ENCODE measurements at regions of chr2 and their contacts with region 1.

Region 1: GRCh38 chr2:64865073-64865830 is 123.9 kb upstream of the SLC1A4 start:
- DNase-seq: peak; percentile 62 to 69
- H3K4me3 ChIP-seq: peak overlapping the region; percentile 42 to 54
- H3K27ac ChIP-seq: peak overlapping the region; percentile 86 to 87
- H3K4me1 ChIP-seq: peaks cover 0 to 5% of the 10 kb centered on the region in 2 donors
- H3K27me3 ChIP-seq: no peaks in the 10 kb centered on the region
- CTCF ChIP-seq: peak; percentile 40 to 95 (median 92)
- POLR2A ChIP-seq: peak in 1 of 2 donors; percentile 17

Region 2: GRCh38 chr2:64595397-64596160 is 269.7 kb before region 1 on chr2:
- intact Hi-C with region 1: loop called (anchors 10 kb)
- DNase-seq: no peak
- H3K4me3 ChIP-seq: no peak overlapping the region
- H3K27ac ChIP-seq: no peak overlapping the region
- H3K4me1 ChIP-seq: no peaks in the 10 kb centered on the region
- H3K27me3 ChIP-seq: no peaks in the 10 kb centered on the region
- CTCF ChIP-seq: peak in 2 of 4 experiments; percentile 9 to 32
- POLR2A ChIP-seq: no peak

Region 3: DNA sequence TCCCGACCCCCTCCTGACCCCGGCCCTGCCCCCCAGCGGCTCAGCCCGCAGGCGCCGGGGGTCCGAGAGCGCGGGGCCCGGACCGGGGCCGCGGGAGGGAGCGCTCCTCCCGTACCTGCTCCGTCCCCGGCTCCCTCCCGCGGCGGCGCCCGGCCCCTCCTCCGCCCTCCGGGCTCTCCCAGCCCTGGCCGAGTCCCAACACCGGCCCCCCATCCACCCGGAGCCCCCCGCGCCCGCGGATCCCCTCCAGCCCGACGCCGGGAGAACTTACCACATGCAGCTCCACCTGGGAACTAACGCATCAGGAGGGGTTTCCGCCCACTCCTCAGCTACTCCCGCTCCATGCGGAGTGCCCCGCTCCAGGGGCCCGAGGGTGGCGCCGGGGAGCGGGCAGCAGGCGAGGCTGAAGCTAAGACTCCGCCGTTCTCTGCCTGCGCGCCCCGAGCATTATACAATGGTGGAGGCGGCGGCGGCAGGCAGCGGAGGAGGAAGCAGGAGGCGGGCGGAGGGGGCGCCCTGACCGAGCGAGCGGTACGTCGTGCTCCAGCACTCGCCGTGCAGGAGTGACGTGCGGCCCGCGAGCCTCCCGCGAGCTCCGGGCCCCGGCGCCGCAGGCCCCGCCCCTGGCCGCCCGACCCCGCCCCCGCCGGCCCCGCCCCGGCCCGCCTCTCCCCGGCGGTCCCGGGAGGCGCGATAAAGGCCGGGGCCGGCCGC is 211.7 kb before region 1 on chr2 and contains the start of gene SERTAD2:
- intact Hi-C with region 1: loop called (anchors 2 kb)
- DNase-seq: peak; percentile 88 to 89
- H3K4me3 ChIP-seq: peak within 1 kb of the TSS; percentile 94 to 98
- H3K27ac ChIP-seq: peak within 1 kb of the TSS; percentile 98 to 100
- H3K4me1 ChIP-seq: no peaks in the 10 kb centered on the region
- H3K27me3 ChIP-seq: no peaks in the 10 kb centered on the region
- CTCF ChIP-seq: peak in 2 of 4 experiments; percentile 2 to 5
- POLR2A ChIP-seq: peak in 1 of 2 donors; percentile 89
- total RNA-seq, gene SERTAD2: 1.8 to 29.5 (median 8.9) TPM

Measured in uterus (tissue), 4 donors.